Dorsolateral prefrontal cortex (tissue), 120 donors: ENCODE measurements at regions of chr20 and their contacts with region 1.

Region 1: GRCh38 chr20:48657475-48658470 is 170.0 kb downstream of the PREX1 start:
- DNase-seq: peak; percentile 46 to 89 (median 83)
- H3K4me3 ChIP-seq: peak overlapping the region in 8 of 59 donors; percentile 1 to 71 (median 22)
- H3K27ac ChIP-seq: peak overlapping the region; percentile 72 to 100 (median 96)
- H3K27me3 ChIP-seq: no peaks in the 10 kb centered on the region
- CTCF ChIP-seq: peak; percentile 85 to 98 (median 94)

Region 2: DNA sequence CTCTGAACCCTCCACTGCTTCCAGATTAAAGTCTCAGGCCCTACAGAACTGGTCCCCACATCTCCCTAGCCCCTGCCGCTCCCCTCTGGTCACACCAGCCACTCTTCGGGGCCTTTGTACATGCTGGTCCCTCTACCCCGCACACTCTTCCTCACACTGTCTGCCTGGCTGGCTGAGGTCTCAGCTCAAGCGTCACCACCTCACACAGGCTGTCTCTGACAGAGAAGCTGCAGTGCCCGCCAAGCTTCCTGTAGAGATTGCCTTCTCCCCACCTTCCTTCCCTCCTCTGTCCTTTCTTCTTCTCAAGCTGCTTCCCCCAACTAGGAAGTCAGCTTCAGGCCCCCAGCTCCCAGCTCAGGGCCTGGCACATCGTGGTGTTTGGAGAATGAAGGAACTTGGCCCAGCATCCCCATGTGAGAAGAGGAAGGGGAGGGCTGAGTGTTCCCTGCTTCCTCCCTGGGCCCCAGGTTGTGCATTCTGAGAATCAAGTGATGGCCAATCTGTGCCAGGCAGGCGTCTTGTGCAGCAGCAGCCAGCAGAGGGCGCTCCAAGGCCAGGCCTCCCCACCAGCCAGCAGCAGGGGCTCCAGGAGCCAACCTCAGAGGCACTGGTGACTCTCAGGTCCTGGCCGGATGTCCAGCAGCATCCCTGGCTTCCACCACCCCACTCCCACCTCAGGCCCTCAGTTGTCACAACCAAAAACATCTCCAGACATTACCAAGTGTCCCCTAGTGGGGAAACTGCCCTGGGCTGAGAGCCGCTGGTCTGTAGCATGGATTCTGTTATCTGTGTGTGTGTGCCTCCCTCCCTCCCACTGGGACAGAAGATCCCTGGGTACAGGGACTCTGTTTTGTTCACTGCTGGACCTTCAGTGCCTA is 22.1 kb before region 1 on chr20:
- intact Hi-C with region 1: loop called in 1 of 2 experiments (anchors 2 kb)
- DNase-seq: peak; percentile 32 to 88 (median 76)
- H3K4me3 ChIP-seq: no peak overlapping the region
- H3K27ac ChIP-seq: peak overlapping the region in 58 of 59 donors; percentile 33 to 95 (median 81)
- H3K27me3 ChIP-seq: no peaks in the 10 kb centered on the region
- CTCF ChIP-seq: peak; percentile 65 to 96 (median 86)

Region 3: GRCh38 chr20:48728042-48728804 is 70.5 kb after region 1 on chr20:
- intact Hi-C with region 1: loop called (anchors 1 to 5 kb)
- DNase-seq: peak; percentile 34 to 96 (median 94)
- H3K4me3 ChIP-seq: peak overlapping the region in 4 of 59 donors; percentile 3 to 26 (median 18)
- H3K27ac ChIP-seq: peak overlapping the region; percentile 80 to 100 (median 98)
- H3K27me3 ChIP-seq: no peaks in the 10 kb centered on the region
- CTCF ChIP-seq: peak in 12 of 56 donors; percentile 4 to 34 (median 12)

Region 4: DNA sequence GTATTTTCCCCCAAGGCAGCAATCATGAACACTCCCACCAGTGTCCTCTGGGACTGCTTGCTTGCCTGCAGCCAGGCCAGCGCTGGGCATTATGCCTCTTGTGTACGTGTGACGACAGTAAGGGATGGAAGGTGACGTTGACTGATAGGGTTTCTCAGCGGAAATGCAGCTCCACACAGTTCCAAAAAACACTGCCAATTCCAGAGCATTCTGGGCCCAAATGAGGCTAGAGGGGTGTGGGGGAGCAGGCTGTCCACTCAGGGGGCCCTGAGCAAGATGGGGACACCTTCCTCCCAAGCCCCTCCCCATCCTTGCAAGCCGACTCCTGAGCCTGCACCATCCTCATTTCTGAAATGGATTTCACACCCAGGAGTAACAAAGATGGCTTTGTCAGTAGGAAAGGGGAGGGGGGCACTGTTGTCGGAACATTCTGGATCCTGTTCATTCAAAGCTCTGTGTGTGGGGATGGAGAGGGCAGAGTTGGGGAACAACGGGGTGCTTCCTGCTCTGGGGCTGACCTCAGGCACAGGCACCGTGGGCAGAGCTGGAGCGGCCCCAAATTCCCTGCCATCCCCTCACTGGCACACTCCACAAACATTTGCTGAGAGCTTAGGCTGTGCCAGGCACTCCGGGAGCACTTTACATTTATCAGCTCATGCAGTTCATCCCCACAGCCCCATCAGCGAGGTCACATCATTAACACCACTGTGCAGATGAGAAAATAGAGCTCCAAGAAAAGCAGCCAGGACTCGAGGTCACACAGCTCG is 150.1 kb after region 1 on chr20:
- intact Hi-C with region 1: loop called in 1 of 2 experiments (anchors 1 kb)
- DNase-seq: peak in 9 of 10 donors; percentile 43 to 81 (median 70)
- H3K4me3 ChIP-seq: peak overlapping the region in 18 of 59 donors; percentile 1 to 49 (median 12)
- H3K27ac ChIP-seq: peak overlapping the region; percentile 25 to 97 (median 90)
- H3K27me3 ChIP-seq: no peaks in the 10 kb centered on the region
- CTCF ChIP-seq: peak in 3 of 56 donors; percentile 6 to 27 (median 10)

Region 5: GRCh38 chr20:48904365-48905296 is 246.9 kb after region 1 on chr20:
- intact Hi-C with region 1: loop called (anchors 1 kb)
- DNase-seq: peak in 7 of 10 donors; percentile 23 to 71 (median 50)
- H3K4me3 ChIP-seq: peak overlapping the region in 12 of 59 donors; percentile 9 to 32 (median 22)
- H3K27ac ChIP-seq: peak overlapping the region in 19 of 59 donors; percentile 2 to 74 (median 41)
- H3K27me3 ChIP-seq: no peaks in the 10 kb centered on the region
- CTCF ChIP-seq: peak; percentile 84 to 99 (median 92)

Region 6: GRCh38 chr20:49054056-49054643 is 396.4 kb after region 1 on chr20:
- intact Hi-C with region 1: loop called in 1 of 2 experiments (anchors 10 kb)
- DNase-seq: no peak
- H3K4me3 ChIP-seq: no peak overlapping the region
- H3K27ac ChIP-seq: peak overlapping the region in 10 of 59 donors; percentile 7 to 60 (median 28)
- H3K27me3 ChIP-seq: no peaks in the 10 kb centered on the region
- CTCF ChIP-seq: no peak